H1 (cell line): ENCODE measurements at regions of chr12 and their contacts with region 1.

Region 1: GRCh38 chr12:54565310-54565985 is 16.0 kb downstream of the PDE1B start:
- DNase-seq: no peak
- H3K4me3 ChIP-seq: peak overlapping the region in 3 of 4 experiments; percentile 3 to 29 (median 19); a peak in 4 of 8 replicates
- H3K27ac ChIP-seq: no peak overlapping the region
- H3K4me1 ChIP-seq: peaks cover 10 to 17% (median 14%) of the 10 kb centered on the region in 4 experiments; a peak in 6 of 7 replicates
- H3K27me3 ChIP-seq: peaks cover 15 to 38% (median 35%) of the 10 kb centered on the region in 4 experiments
- CTCF ChIP-seq: no peak
- EP300 ChIP-seq: no peak
- POLR2A ChIP-seq: no peak
- RAD21 ChIP-seq: no peak

Region 2: GRCh38 chr12:54497883-54498282 is 67.6 kb before region 1 on chr12:
- CTCF ChIA-PET with region 1: no interaction called
- POLR2A ChIA-PET with region 1: no interaction called
- DNase-seq: no peak
- H3K4me3 ChIP-seq: no peak overlapping the region
- H3K27ac ChIP-seq: no peak overlapping the region
- H3K4me1 ChIP-seq: no peaks in the 10 kb centered on the region
- H3K27me3 ChIP-seq: no peaks in the 10 kb centered on the region
- CTCF ChIP-seq: no peak
- EP300 ChIP-seq: no peak
- POLR2A ChIP-seq: no peak
- RAD21 ChIP-seq: no peak

Region 3: GRCh38 chr12:54541751-54542290 is 23.6 kb before region 1 on chr12:
- CTCF ChIA-PET with region 1: interaction called, 37 read pairs
- POLR2A ChIA-PET with region 1: interaction called, 3 read pairs
- DNase-seq: no peak
- H3K4me3 ChIP-seq: no peak overlapping the region
- H3K27ac ChIP-seq: no peak overlapping the region
- H3K4me1 ChIP-seq: peaks cover 0 to 9% (median 3%) of the 10 kb centered on the region in 4 experiments; a peak in 4 of 7 replicates
- H3K27me3 ChIP-seq: peaks cover 0 to 7% (median 3%) of the 10 kb centered on the region in 4 experiments; a peak in 4 of 7 replicates
- CTCF ChIP-seq: no peak
- EP300 ChIP-seq: no peak
- POLR2A ChIP-seq: no peak
- RAD21 ChIP-seq: no peak

Region 4: GRCh38 chr12:54549774-54550451 is 15.5 kb before region 1 on chr12:
- CTCF ChIA-PET with region 1: interaction called, 55 read pairs
- POLR2A ChIA-PET with region 1: interaction called, 4 read pairs
- DNase-seq: no peak
- H3K4me3 ChIP-seq: peak overlapping the region; percentile 29 to 77 (median 64)
- H3K27ac ChIP-seq: no peak overlapping the region
- H3K4me1 ChIP-seq: peaks cover 2 to 15% (median 10%) of the 10 kb centered on the region in 4 experiments
- H3K27me3 ChIP-seq: peaks cover 17 to 75% (median 57%) of the 10 kb centered on the region in 4 experiments
- CTCF ChIP-seq: no peak
- EP300 ChIP-seq: no peak
- POLR2A ChIP-seq: no peak
- RAD21 ChIP-seq: no peak

Region 5: DNA sequence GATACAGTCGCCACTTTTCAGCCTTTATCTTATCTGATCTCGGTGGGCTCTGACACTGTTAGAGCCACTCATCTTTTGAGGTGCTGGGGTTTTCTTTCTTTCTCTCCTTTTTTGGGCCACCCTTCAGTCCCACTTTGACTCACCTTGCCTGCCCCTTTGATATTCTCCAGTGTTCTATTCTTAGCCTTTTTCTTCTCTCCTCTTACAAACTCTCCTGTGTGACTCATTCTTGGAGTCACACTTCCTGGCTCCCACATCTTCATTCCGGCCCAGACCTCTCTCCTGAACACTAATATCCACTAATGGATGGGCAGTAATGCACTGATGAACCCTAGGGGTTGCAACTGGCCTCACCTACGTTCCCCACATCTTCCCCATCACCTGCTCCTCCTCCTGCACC is 85.0 kb after region 1 on chr12:
- CTCF ChIA-PET with region 1: no interaction called
- POLR2A ChIA-PET with region 1: no interaction called
- DNase-seq: no peak
- H3K4me3 ChIP-seq: no peak overlapping the region
- H3K27ac ChIP-seq: no peak overlapping the region
- H3K4me1 ChIP-seq: no peaks in the 10 kb centered on the region
- H3K27me3 ChIP-seq: no peaks in the 10 kb centered on the region
- CTCF ChIP-seq: no peak
- EP300 ChIP-seq: no peak
- POLR2A ChIP-seq: no peak
- RAD21 ChIP-seq: no peak

Region 6: DNA sequence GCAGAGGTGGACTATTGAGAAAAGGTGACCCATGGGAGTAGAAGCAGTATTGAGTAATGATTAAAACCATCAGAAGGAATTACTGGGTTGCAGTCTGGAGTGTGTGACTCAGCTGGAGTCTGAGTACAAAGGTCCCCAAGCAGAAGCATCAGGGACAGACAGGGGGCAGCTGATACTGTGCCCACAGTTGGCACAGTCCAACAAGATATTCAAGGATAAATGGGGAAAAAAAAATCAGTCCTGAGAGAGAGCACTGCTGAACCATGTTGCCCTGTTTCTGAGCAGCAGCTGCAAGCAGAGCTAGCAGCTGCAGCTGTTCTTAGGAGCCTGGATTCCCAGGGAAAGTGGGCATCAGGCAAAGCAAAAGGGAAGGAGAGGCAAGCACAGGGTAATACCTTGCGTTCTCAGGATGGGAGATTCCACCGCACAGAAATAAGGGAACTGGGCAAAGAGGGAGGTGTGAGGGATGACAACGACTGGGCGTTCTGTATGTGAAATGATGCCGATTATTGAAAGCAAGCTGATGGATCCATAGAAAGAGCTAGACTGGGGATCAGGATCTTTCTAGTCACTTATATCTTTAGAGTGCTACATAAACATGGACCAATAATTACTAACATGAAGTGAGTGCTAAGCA is 472.0 kb after region 1 on chr12:
- CTCF ChIA-PET with region 1: no interaction called
- POLR2A ChIA-PET with region 1: no interaction called
- DNase-seq: no peak
- H3K4me3 ChIP-seq: no peak overlapping the region
- H3K27ac ChIP-seq: no peak overlapping the region
- H3K4me1 ChIP-seq: peaks cover 0 to 2% (median 0%) of the 10 kb centered on the region in 4 experiments; a peak in 1 of 7 replicates
- H3K27me3 ChIP-seq: no peaks in the 10 kb centered on the region
- CTCF ChIP-seq: no peak
- EP300 ChIP-seq: no peak
- POLR2A ChIP-seq: no peak
- RAD21 ChIP-seq: no peak